ENCODE measurements at regions of chr7 and their contacts with region 1.

Region 1: GRCh38 chr7:20514364-20514763 is 101.1 kb upstream of the ABCB5 start:
- DNase-seq: peak; percentile 88
- H3K4me3 ChIP-seq: no peak overlapping the region
- H3K27ac ChIP-seq: no peak overlapping the region
- H3K4me1 ChIP-seq: no peaks in the 10 kb centered on the region
- H3K27me3 ChIP-seq: no peaks in the 10 kb centered on the region
- CTCF ChIP-seq: no peak

Region 2: GRCh38 chr7:20539201-20539600 is 24.8 kb after region 1 on chr7:
- CTCF ChIA-PET with region 1: interaction called, 10 read pairs
- dilution Hi-C with region 1: no loop called
- in situ Hi-C with region 1: no loop called
- intact Hi-C with region 1: no loop called
- DNase-seq: no peak
- H3K4me3 ChIP-seq: no peak overlapping the region
- H3K27ac ChIP-seq: no peak overlapping the region
- H3K4me1 ChIP-seq: peaks cover 21% of the 10 kb centered on the region
- H3K27me3 ChIP-seq: no peaks in the 10 kb centered on the region
- CTCF ChIP-seq: peak; percentile 26 to 51

Measured in mammary epithelial cell (primary cell).